Ascending aorta (tissue), 2 donors: ENCODE measurements at regions of chr6 and their contacts with region 1.

Region 1: DNA sequence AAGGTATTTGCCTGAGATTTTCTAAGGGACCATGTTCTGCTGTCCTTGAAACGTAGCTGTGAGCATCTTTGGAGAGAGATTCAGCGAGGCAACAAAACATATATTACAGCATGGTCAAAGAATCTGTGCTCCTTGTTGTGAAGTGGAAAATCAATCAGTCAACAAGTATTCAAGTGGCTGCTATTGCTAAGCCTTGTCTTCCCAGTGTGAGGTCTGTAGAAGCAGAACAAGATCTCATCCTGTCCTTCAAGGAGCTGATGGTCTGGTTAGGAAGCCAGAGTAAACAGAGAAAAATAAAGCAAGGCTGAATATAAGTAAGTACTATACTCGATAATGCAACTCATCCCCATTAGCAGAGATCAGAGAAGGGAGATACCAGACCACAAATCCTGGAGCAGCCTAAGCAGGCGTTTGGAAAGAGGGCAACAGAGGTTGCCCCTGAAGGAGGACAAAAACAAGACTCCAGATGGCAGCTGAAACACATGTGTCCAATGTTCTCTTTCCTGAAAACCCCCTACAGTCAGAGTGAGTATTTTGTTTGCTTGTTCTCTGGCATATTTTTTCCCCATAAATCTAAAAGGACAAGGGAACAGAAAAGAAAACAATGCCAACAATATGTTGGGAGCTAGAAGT is 392.0 kb downstream of the SYNE1 start:
- DNase-seq: no peak
- H3K4me3 ChIP-seq: no peak overlapping the region
- H3K27ac ChIP-seq: peak overlapping the region; percentile 58 to 59
- H3K4me1 ChIP-seq: peaks cover 5 to 53% of the 10 kb centered on the region in 2 donors
- H3K27me3 ChIP-seq: no peaks in the 10 kb centered on the region
- CTCF ChIP-seq: no peak

Region 2: GRCh38 chr6:150924808-150925589 is 1320.1 kb before region 1 on chr6:
- intact Hi-C with region 1: no loop called
- DNase-seq: peak in 1 of 2 donors; percentile 76
- H3K4me3 ChIP-seq: no peak overlapping the region
- H3K27ac ChIP-seq: peak overlapping the region; percentile 54 to 70
- H3K4me1 ChIP-seq: peaks cover 0 to 16% of the 10 kb centered on the region in 2 donors
- H3K27me3 ChIP-seq: no peaks in the 10 kb centered on the region
- CTCF ChIP-seq: peak in 1 of 3 experiments; percentile 20

Region 3: GRCh38 chr6:152151920-152152319 is 93.2 kb before region 1 on chr6:
- intact Hi-C with region 1: loop called (anchors 5 kb)
- DNase-seq: no peak
- H3K4me3 ChIP-seq: no peak overlapping the region
- H3K27ac ChIP-seq: no peak overlapping the region
- H3K4me1 ChIP-seq: peaks cover 0 to 1% of the 10 kb centered on the region in 2 donors
- H3K27me3 ChIP-seq: no peaks in the 10 kb centered on the region
- CTCF ChIP-seq: no peak

Region 4: GRCh38 chr6:152267967-152268845 is 23.1 kb after region 1 on chr6:
- intact Hi-C with region 1: loop called (anchors 2 kb)
- DNase-seq: no peak
- H3K4me3 ChIP-seq: no peak overlapping the region
- H3K27ac ChIP-seq: peak overlapping the region; percentile 35 to 81
- H3K4me1 ChIP-seq: peaks cover 7 to 52% of the 10 kb centered on the region in 2 donors
- H3K27me3 ChIP-seq: no peaks in the 10 kb centered on the region
- CTCF ChIP-seq: peak in 2 of 3 experiments; percentile 43 to 56